ENCODE measurements at regions of chr18 and their contacts with region 1.

Region 1: GRCh38 chr18:28439870-28440269 is 262.9 kb upstream of the CDH2 start:
- DNase-seq: peak; percentile 44
- ATAC-seq: no peak; the same call in 1 of the 2 replicates
- H3K4me3 ChIP-seq: no peak overlapping the region
- H3K27ac ChIP-seq: no peak overlapping the region
- H3K4me1 ChIP-seq: no peaks in the 10 kb centered on the region
- H3K27me3 ChIP-seq: no peaks in the 10 kb centered on the region
- CTCF ChIP-seq: peak; percentile 58

Region 2: GRCh38 chr18:28455971-28456370 is 16.1 kb after region 1 on chr18:
- CTCF ChIA-PET with region 1: no interaction called
- POLR2A ChIA-PET with region 1: no interaction called
- intact Hi-C with region 1: loop called (anchors 1 kb)
- DNase-seq: peak; percentile 15
- ATAC-seq: peak; percentile 33
- H3K4me3 ChIP-seq: no peak overlapping the region
- H3K27ac ChIP-seq: no peak overlapping the region
- H3K4me1 ChIP-seq: peaks cover 30% of the 10 kb centered on the region
- H3K27me3 ChIP-seq: no peaks in the 10 kb centered on the region
- CTCF ChIP-seq: no peak

Region 3: GRCh38 chr18:28494151-28494550 is 54.3 kb after region 1 on chr18:
- CTCF ChIA-PET with region 1: no interaction called
- POLR2A ChIA-PET with region 1: no interaction called
- intact Hi-C with region 1: no loop called
- DNase-seq: no peak
- ATAC-seq: no peak
- H3K4me3 ChIP-seq: no peak overlapping the region
- H3K27ac ChIP-seq: no peak overlapping the region
- H3K4me1 ChIP-seq: no peaks in the 10 kb centered on the region
- H3K27me3 ChIP-seq: no peaks in the 10 kb centered on the region
- CTCF ChIP-seq: no peak